ENCODE measurements at regions of chr11 and their contacts with region 1.

Region 1: DNA sequence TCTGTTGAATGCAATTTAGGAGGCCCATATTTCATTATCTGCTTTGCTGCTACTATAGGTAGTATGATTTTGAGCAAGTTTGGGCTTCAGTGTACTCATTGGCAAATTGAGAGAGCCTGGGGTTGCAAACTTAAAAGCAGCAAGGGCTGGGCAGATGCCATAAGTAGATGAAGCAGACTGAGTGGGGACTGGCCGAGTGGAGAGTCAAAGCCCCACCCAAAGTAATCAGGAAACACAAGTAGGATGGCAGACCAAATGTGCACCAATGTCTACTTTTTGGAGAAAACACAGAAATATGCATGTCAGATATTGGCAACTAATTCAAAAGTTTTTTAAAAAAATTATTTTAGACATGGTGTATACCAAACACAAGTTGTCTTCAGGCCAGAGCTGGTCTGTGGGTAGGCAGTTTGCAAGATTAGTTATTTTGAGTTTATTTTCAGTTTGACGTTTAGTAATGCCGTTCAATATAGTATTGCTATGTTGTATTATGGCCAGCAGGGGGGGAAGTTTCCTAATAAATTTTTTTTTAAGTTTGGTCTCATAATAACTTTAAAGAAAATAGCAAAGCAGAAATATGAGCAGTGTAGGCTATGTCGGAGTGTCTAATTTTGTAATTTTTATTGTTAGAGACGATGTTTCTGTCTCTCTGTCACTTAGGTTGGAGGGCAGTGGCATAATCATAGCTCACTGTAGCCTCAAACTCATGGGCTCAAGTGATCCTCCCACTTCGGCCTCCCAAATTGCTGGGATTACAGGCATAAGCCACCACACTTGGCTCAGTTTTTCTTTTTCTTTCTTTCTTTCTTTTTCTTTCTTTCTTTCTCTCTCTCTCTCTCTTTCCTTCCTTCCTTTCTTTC is 105.1 kb downstream of the HIPK3 start:
- DNase-seq: no peak
- H3K4me3 Mint-ChIP-seq: no peak overlapping the region
- H3K27ac Mint-ChIP-seq: no peak overlapping the region
- H3K4me1 Mint-ChIP-seq: peaks cover 2% of the 10 kb centered on the region
- H3K27me3 Mint-ChIP-seq: peaks cover 8% of the 10 kb centered on the region

Region 2: DNA sequence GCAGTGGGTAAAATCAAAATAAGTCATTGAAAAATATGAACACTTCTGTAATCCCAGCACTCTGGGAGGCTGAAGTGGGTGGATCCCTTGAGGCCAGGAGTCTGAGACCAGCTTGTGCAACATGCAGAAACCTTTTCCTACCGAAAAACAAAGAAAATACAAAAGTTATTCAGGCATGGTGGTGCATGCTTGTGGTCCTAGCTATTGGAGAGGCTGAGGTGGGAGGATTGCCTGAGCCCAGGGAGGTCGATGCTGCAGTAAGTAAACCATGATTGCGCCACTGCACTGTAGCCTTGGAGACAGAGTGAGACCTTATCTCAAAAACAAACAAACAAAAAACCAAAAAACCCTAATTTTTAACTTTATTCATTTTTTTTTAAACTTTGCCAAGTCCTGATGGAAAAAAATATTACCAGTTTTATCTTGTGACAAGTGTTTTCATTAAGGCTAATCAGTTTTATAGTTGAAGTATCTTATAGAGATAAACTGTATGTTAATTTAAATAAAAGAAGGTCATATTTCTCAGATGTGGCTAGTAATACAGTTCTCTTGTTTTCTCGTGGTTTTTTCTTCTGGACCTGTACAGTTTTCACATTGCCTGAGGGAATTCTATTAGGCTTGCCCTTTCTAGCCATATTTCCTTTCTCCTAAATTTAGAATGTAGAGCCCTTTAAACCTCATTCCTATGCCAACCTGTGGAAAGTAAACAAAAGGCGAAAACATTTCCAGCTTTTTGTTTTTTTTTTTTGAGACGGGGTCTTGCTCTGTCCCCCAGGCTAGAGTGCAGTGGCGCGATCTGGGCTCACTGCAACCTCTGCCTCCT is 95.7 kb before region 1 on chr11:
- CTCF ChIA-PET with region 1: no interaction called
- DNase-seq: no peak
- H3K4me3 Mint-ChIP-seq: no peak overlapping the region
- H3K27ac Mint-ChIP-seq: no peak overlapping the region
- H3K4me1 Mint-ChIP-seq: peaks cover 9% of the 10 kb centered on the region
- H3K27me3 Mint-ChIP-seq: peaks cover 3% of the 10 kb centered on the region

Region 3: GRCh38 chr11:33347490-33348125 is 14.7 kb before region 1 on chr11:
- CTCF ChIA-PET with region 1: interaction called, 11 read pairs
- DNase-seq: no peak
- H3K4me3 Mint-ChIP-seq: no peak overlapping the region
- H3K27ac Mint-ChIP-seq: no peak overlapping the region
- H3K4me1 Mint-ChIP-seq: no peaks in the 10 kb centered on the region
- H3K27me3 Mint-ChIP-seq: no peaks in the 10 kb centered on the region

Measured in activated naive CD4-positive, alpha-beta T cell treated with anti-CD3 and anti-CD28 coated beads, Interleukin-2, amount 10 ng/mL, durations not matched to agents 7 days and 5 days (primary cell).